ENCODE measurements at regions of chr19 and their contacts with region 1.

Region 1: DNA sequence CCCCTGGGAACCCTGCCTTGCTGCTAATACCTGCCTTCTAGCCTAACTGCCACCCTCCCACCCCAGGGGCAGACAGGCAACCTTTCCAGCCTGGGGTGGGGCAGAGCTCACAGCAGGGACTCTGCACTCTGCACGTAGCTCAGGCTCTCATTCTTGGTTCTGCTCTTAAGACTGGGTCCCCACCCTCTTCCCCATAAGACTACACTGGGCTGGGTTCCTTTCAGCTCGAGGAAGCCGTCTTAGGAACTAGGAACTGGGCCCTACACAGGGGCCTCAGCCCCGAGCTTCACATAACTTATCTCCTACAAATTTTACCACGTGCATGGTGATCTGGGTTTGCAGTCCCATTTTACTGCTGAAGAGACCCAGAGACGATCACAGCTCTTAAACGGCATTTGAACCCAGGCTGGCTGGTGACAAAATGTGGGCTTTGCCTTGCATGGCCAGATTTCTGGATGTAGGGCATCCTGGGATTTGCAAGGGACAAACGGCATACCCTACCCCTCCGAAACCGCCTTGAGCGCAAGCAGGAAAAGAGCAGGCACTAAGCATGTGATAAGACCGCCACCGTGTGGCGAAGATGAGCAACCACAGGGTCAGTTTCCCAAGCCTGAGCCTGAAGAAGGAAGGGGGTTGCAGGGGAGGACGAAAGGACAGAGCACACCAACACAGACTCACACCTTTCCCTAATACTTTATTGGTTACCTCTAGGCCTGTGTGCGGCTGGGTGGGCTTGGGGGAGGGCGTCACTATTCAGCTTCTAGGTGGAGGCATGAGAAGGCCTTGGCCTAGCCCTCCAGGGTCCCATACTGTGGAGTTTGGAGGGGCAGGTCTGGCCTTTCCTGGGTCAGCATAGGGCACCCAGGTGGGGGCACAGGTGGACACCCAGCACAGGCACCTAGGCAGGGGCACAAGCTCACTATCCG is 5.1 kb downstream of the JUNB start:
- DNase-seq: peak; percentile 46 to 88 (median 78)
- ATAC-seq: peak; percentile 6
- H3K4me3 ChIP-seq: peak overlapping the region; percentile 5 to 25
- H3K4me3 Mint-ChIP-seq: peak overlapping the region; percentile 70
- H3K27ac ChIP-seq: peak overlapping the region in 1 of 2 experiments; percentile 36
- H3K27ac Mint-ChIP-seq: peak overlapping the region; percentile 89
- H3K4me1 ChIP-seq: peaks cover 36% of the 10 kb centered on the region
- H3K4me1 Mint-ChIP-seq: peaks cover 38% of the 10 kb centered on the region
- H3K27me3 ChIP-seq: no peaks in the 10 kb centered on the region
- H3K27me3 Mint-ChIP-seq: no peaks in the 10 kb centered on the region
- CTCF ChIP-seq: peak; percentile 86

Region 2: DNA sequence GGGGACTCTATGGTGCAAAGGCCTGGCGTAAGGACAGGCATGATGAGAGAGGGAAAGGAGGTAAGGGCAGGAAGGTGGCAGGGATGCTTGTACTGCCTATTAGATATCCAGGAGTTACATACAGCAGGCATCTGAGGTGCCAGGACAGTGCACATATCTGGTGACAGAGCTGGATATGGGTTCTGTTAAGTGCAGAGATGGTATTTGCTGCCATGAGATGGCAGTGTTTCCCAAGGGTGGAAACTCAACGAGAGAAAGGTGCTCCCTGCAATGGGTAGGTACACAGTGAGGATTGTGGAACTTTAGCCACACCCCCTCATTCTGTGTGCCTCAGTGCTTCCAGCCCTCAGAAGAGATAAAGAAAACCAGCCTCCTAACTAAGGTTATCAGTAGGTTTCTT is 79.5 kb before region 1 on chr19:
- CTCF ChIA-PET with region 1: interaction called, 18 read pairs
- POLR2A ChIA-PET with region 1: interaction called, 10 read pairs
- intact Hi-C with region 1: loop called (anchors 1 kb)
- DNase-seq: peak in 4 of 9 experiments; percentile 36 to 74 (median 62)
- ATAC-seq: peak; percentile 79
- H3K4me3 ChIP-seq: no peak overlapping the region
- H3K4me3 Mint-ChIP-seq: no peak overlapping the region
- H3K27ac ChIP-seq: no peak overlapping the region
- H3K27ac Mint-ChIP-seq: no peak overlapping the region
- H3K4me1 ChIP-seq: peaks cover 16% of the 10 kb centered on the region
- H3K4me1 Mint-ChIP-seq: peaks cover 22% of the 10 kb centered on the region
- H3K27me3 ChIP-seq: no peaks in the 10 kb centered on the region
- H3K27me3 Mint-ChIP-seq: no peaks in the 10 kb centered on the region
- CTCF ChIP-seq: no peak

Region 3: GRCh38 chr19:12757544-12758274 is 38.7 kb before region 1 on chr19:
- CTCF ChIA-PET with region 1: interaction called, 339 read pairs
- POLR2A ChIA-PET with region 1: interaction called, 4 read pairs
- intact Hi-C with region 1: loop called (anchors 1 kb)
- DNase-seq: peak; percentile 32 to 74 (median 49)
- ATAC-seq: peak; percentile 78
- H3K4me3 ChIP-seq: no peak overlapping the region
- H3K4me3 Mint-ChIP-seq: peak overlapping the region; percentile 18
- H3K27ac ChIP-seq: no peak overlapping the region
- H3K27ac Mint-ChIP-seq: no peak overlapping the region
- H3K4me1 ChIP-seq: peaks cover 7% of the 10 kb centered on the region
- H3K4me1 Mint-ChIP-seq: peaks cover 6% of the 10 kb centered on the region
- H3K27me3 ChIP-seq: peaks cover 3 to 4% of the 10 kb centered on the region in 2 experiments
- H3K27me3 Mint-ChIP-seq: peaks cover 16% of the 10 kb centered on the region
- CTCF ChIP-seq: peak; percentile 93

Region 4: DNA sequence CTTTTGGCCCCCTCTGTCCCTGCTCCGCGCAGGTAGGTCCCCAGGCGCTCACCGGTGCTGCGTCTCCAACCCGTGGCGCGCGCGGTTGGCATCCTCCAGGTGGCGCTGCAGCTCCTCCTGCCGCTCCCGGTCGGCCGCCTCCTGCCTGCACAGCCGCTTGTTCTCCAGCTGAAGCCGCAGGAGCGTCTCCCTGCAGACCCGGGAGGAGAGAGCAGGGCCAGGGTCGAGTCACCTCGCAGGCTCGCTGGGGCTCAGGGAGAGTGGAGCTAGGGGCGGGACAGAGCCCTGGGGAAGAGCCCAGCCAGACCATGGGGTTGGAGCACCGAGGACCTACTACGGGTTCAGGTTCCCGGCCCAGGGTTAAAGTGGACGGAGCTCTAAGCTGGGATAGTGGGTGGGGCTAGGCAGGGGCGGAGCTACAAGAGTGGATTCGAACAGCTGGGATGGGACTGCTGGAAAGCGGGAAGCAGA is 30.3 kb before region 1 on chr19:
- CTCF ChIA-PET with region 1: interaction called, 339 read pairs
- POLR2A ChIA-PET with region 1: interaction called, 16 read pairs
- intact Hi-C with region 1: loop called (anchors 1 kb)
- DNase-seq: peak in 8 of 9 experiments; percentile 54 to 90 (median 78)
- ATAC-seq: peak; percentile 61
- H3K4me3 ChIP-seq: no peak overlapping the region
- H3K4me3 Mint-ChIP-seq: no peak overlapping the region
- H3K27ac ChIP-seq: no peak overlapping the region
- H3K27ac Mint-ChIP-seq: no peak overlapping the region
- H3K4me1 ChIP-seq: no peaks in the 10 kb centered on the region
- H3K4me1 Mint-ChIP-seq: peaks cover 3% of the 10 kb centered on the region
- H3K27me3 ChIP-seq: no peaks in the 10 kb centered on the region
- H3K27me3 Mint-ChIP-seq: no peaks in the 10 kb centered on the region
- CTCF ChIP-seq: peak; percentile 56

Region 5: DNA sequence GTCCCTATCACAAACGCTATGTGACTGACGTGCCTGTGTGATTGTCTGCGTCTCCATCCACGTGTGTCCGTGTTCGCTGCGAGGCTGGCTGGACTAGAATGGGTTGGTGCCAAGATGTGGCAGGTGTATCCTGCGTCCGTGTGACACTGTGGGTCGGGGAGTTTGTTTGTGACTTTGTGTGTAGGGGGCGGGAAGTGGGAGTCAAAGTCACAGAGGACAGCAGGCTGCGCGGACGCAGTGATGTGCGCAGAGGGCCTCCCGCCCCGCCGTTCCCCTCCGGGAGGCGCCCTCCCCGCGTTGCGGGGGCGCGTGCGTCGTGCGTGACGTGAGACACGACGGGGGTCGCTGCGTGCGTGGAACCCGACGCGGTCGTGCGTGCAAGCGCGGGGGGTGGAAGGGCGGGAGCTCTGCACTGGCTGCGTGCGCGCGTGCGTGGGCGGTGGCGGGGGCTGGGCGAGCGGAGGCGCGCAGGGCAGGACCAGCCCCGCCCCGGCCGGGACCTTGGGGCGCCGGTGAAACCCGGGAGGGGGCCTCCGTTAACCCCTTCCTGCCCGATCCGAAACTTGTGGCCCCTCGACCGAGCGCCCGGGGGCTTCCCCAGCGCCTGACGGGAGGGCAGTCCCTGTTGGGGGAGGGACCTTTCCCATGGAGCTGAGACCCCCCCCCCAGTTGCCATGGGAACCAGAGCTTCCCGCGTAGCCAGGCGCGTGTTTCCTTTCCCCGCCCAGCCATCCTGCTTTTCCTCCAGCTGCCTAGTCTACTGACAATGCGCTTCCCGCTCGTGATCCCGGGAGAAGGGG is 14.0 kb before region 1 on chr19:
- CTCF ChIA-PET with region 1: interaction called, 396 read pairs
- POLR2A ChIA-PET with region 1: interaction called, 215 read pairs
- intact Hi-C with region 1: loop called (anchors 1 kb)
- DNase-seq: peak; percentile 88 to 99 (median 96)
- ATAC-seq: peak; percentile 75
- H3K4me3 ChIP-seq: peak overlapping the region; percentile 50 to 62
- H3K4me3 Mint-ChIP-seq: peak overlapping the region; percentile 80
- H3K27ac ChIP-seq: peak overlapping the region; percentile 91 to 99
- H3K27ac Mint-ChIP-seq: peak overlapping the region; percentile 95
- H3K4me1 ChIP-seq: peaks cover 68% of the 10 kb centered on the region
- H3K4me1 Mint-ChIP-seq: peaks cover 38% of the 10 kb centered on the region
- H3K27me3 ChIP-seq: no peaks in the 10 kb centered on the region
- H3K27me3 Mint-ChIP-seq: no peaks in the 10 kb centered on the region
- CTCF ChIP-seq: no peak

Region 6: DNA sequence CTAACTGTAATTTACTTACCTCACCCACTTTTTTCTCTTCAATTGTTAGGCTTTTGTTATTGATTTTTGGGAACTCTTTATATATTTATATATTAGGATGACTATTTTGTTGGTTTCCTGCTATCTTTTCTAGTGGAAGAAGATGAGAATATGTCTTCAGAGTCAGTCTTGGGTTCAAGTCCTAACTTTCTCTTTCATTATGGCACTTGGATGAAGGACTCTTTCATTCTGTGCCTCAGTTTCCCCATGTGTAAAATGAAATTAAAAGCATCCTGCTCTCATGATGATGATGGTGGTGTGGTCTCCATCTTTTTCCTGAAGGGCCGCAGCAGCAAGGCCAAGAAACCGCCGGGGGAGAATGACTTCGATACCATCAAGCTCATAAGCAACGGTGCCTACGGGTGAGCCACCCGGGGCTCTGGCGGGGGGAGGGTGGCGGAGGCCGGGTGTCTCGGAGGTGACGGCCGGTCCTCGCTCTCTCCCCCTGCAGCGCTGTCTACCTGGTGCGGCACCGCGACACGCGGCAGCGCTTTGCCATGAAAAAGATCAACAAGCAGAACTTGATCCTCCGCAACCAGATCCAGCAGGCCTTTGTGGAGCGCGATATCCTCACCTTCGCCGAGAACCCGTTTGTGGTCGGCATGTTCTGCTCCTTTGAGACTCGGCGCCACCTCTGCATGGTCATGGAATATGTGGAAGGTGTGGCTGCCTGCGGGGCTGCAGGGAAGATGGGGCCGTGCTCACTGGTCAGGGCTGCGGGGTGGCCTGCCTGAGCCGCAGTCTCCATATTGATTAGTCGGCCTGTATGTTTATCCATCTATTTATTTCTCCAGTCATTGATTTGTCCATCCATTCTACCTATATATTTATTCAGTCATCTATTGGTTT is 61.9 kb after region 1 on chr19:
- CTCF ChIA-PET with region 1: no interaction called
- POLR2A ChIA-PET with region 1: no interaction called
- intact Hi-C with region 1: no loop called
- DNase-seq: no peak
- ATAC-seq: no peak
- H3K4me3 ChIP-seq: no peak overlapping the region
- H3K4me3 Mint-ChIP-seq: no peak overlapping the region
- H3K27ac ChIP-seq: no peak overlapping the region
- H3K27ac Mint-ChIP-seq: no peak overlapping the region
- H3K4me1 ChIP-seq: no peaks in the 10 kb centered on the region
- H3K4me1 Mint-ChIP-seq: no peaks in the 10 kb centered on the region
- H3K27me3 ChIP-seq: no peaks in the 10 kb centered on the region
- H3K27me3 Mint-ChIP-seq: no peaks in the 10 kb centered on the region
- CTCF ChIP-seq: no peak

Region 7: DNA sequence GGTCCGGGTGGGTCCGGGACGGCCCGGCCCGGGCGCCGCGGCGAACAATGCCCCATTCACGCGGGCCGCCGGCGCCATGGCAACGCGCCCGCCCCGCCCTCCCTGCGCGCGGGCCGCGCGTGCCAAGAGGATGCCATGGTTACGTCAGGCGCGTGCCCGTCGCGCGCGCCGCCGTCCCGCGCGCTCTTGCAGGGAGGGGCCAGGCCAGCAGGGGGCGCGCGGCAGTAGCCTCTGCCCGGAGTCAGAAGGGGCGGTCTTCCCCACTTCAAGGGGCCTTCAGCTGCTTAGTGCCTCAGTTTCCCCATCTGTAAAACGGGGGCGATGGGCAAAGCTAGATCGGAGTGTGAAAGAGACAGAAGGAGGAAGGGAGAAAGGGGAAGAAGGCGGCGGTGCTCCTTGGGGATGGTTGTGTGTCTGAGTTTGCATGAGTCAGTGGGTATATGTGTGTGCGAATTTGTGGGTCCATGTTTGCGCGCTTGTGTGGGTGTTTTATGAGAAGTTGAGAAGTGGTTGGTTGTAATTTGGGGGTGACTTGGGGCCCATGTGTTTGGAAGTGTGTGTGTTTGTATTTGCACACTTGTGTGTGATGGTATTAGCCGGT is 187.2 kb after region 1 on chr19:
- CTCF ChIA-PET with region 1: no interaction called
- POLR2A ChIA-PET with region 1: no interaction called
- intact Hi-C with region 1: no loop called
- DNase-seq: peak; percentile 64 to 90 (median 81)
- ATAC-seq: peak; percentile 77
- H3K4me3 ChIP-seq: no peak overlapping the region
- H3K4me3 Mint-ChIP-seq: no peak overlapping the region
- H3K27ac ChIP-seq: peak overlapping the region in 1 of 2 experiments; percentile 20
- H3K27ac Mint-ChIP-seq: no peak overlapping the region
- H3K4me1 ChIP-seq: peaks cover 15% of the 10 kb centered on the region
- H3K4me1 Mint-ChIP-seq: peaks cover 8% of the 10 kb centered on the region
- H3K27me3 ChIP-seq: peaks cover 3 to 25% of the 10 kb centered on the region in 2 experiments
- H3K27me3 Mint-ChIP-seq: peaks cover 3% of the 10 kb centered on the region
- CTCF ChIP-seq: peak; percentile 87

Region 8: DNA sequence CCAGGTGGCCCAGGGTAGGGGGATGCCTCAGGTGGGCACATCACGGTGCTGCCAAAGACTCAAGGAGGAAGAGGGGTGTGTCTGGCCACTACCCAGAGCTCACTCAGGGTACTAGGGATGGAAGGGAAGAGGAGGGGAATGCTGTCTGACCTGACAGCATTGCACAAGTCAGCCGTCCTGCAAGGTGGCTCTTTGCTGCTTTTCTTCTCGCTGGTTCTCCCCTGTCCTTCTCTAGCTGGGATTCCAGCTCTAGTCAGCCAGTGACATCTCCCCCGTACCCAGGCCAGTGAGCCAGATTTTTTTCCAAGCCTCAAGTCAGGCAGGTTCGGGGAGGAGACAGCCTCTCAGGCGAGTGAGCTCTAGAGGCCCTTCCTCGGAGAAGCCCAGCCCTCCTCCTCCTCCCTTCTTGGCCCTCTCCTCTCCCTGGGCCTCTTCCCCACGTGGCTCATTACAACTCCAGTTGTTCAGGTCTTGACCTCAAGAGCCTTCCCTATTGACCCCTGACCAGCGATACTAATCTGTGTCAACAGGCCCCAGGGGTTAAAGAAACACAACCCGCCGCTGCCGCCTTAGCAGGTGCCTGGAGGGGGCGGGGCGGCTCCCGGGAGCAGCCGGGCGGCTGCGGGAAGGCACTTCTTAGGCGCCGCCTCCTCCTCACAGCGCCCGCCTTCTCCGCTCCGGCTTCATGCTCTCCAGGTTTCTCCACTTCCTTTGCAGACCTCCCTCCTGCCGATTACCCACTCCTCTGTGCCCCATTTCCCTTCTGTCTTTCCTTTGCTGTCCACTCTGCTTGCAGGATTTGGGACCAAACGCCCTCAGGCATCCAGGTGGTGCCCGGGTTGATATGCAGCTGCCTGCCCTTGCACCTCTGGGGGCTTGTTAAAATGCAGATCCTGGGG is 255.1 kb after region 1 on chr19:
- CTCF ChIA-PET with region 1: no interaction called
- POLR2A ChIA-PET with region 1: no interaction called
- intact Hi-C with region 1: no loop called
- DNase-seq: peak in 3 of 9 experiments; percentile 22 to 37 (median 22)
- ATAC-seq: peak; percentile 31
- H3K4me3 ChIP-seq: no peak overlapping the region
- H3K4me3 Mint-ChIP-seq: peak overlapping the region; percentile 46
- H3K27ac ChIP-seq: no peak overlapping the region
- H3K27ac Mint-ChIP-seq: no peak overlapping the region
- H3K4me1 ChIP-seq: peaks cover 7% of the 10 kb centered on the region
- H3K4me1 Mint-ChIP-seq: peaks cover 10% of the 10 kb centered on the region
- H3K27me3 ChIP-seq: peaks cover 0 to 7% of the 10 kb centered on the region in 2 experiments
- H3K27me3 Mint-ChIP-seq: peaks cover 5% of the 10 kb centered on the region
- CTCF ChIP-seq: no peak

Region 9: DNA sequence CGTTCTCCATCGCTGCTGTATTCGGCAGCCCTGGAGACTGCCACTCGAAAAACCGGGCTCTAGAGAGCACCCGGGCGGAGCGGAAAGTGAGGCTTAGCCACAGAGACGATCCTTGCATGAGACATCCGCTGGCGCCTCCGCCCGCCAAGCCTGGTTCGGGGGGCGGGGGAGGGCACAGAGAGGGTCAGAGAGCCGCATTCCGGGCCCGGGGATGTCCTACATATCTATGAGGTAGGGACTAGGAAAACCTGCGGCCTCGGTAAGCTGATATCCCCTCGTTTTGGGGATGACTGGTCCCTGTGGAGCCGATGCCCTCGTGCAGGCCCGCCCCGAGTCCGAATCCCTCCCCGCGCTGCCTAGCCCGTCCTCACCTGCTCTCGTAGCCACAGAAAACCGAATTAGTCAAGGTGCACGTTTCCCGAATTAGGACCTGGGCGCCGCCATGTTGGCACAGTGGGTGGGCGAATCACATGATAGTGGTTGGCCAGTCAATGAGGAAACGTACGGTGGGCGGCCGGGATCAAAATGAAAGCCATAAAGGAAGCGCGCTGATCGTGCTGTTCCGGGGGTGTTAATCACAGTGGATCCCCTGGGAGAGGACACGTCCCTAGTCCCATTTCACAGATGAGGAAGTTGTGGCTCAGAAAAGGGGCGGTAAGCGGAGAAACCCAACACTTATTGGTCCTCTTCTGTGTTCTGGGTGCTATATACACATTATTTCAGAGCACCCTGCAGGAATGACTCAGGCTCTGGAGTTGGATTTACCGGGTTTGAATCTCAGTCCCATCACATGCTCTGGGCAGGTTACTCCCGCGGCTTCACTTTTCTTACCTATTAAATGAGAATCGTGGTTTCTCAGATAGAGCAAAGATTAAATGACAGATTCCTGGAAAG is 320.1 kb after region 1 on chr19 and contains the start of gene TRMT1:
- CTCF ChIA-PET with region 1: no interaction called
- POLR2A ChIA-PET with region 1: no interaction called
- intact Hi-C with region 1: no loop called
- DNase-seq: peak; percentile 72 to 93 (median 88)
- ATAC-seq: peak; percentile 55
- H3K4me3 ChIP-seq: peak within 1 kb of the TSS; percentile 65 to 78
- H3K4me3 Mint-ChIP-seq: peak within 1 kb of the TSS; percentile 98
- H3K27ac ChIP-seq: peak within 1 kb of the TSS; percentile 41 to 61
- H3K27ac Mint-ChIP-seq: peak within 1 kb of the TSS; percentile 96
- H3K4me1 ChIP-seq: peaks cover 35% of the 10 kb centered on the region
- H3K4me1 Mint-ChIP-seq: peaks cover 47% of the 10 kb centered on the region
- H3K27me3 ChIP-seq: no peaks in the 10 kb centered on the region
- H3K27me3 Mint-ChIP-seq: no peaks in the 10 kb centered on the region
- CTCF ChIP-seq: no peak
- total RNA-seq, gene TRMT1: 76.4 to 77.2 TPM